ENCODE measurements at regions of chr2 and their contacts with region 1.

Region 1: DNA sequence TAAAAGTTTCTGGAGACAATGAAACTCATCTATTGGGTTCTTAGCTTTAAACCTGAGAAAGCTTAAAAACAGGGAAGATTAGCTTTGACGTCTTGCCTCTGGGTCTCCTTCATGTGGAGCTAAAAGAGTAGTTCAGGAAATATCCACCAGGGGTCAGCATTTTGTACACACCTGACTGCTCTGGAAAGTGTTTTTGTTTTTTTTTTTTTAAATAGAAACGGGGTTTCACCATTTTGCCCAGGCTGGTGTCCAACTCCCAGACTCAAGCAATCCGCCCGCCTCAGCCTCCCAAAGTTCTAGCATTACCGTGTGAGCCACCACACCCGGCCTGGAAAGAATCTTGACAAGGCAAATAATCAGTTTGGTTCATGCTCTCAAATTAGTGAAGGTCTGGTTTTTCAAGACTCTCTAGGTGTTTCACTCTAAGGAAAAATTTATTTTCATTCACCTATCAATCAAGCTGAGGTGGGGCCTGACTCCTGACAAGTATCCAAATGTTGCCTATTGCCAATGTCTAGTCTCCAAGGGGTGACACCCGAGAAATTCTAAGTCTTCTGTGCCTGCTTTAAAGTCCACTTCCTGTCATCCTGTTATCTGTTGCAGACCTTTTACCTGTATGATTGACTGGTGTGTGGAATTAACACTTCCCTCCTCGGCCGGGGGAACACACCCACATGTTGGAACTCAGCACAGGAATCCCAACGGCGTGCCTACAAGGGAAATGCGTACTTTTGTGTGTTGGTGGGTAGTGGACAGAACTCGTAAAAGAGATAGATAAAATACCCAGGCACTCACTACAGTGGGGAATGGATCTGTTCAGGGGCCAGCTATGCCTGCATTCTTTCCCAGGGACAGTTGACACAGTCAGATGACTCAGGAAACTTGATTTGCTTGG is 11.3 kb downstream of the IL1RN start:
- DNase-seq: peak; percentile 38
- H3K4me3 Mint-ChIP-seq: peak overlapping the region; percentile 23
- H3K27ac Mint-ChIP-seq: peak overlapping the region; percentile 15
- H3K4me1 Mint-ChIP-seq: peaks cover 24% of the 10 kb centered on the region
- H3K27me3 Mint-ChIP-seq: no peaks in the 10 kb centered on the region

Region 2: DNA sequence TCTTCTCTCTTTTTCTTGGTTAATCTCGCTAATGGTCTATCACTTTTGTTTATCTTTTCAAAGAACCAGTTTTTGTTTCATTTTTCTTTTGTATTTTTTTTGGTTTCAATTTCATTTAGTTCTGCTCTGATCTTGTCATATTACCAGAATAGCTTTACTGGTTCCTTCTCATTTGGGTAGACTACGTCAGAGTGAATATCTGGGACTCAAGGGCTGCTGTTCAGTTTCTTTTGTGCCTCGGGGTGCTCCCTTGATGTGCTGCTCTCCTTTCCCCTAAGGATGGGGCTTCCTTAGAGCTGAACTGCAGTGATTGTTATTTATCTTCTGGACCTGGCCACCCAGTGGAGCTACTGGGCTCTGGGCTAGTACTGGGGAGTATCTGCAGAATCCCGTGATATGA is 40.6 kb before region 1 on chr2:
- CTCF ChIA-PET with region 1: interaction called, 15 read pairs
- POLR2A ChIA-PET with region 1: no interaction called
- intact Hi-C with region 1: no loop called
- DNase-seq: peak; percentile 58
- H3K4me3 Mint-ChIP-seq: peak overlapping the region; percentile 70
- H3K27ac Mint-ChIP-seq: peak overlapping the region; percentile 88
- H3K4me1 Mint-ChIP-seq: peaks cover 32% of the 10 kb centered on the region
- H3K27me3 Mint-ChIP-seq: peaks cover 5% of the 10 kb centered on the region

Region 3: GRCh38 chr2:113148606-113149560 is 10.2 kb after region 1 on chr2:
- CTCF ChIA-PET with region 1: interaction called, 10 read pairs
- POLR2A ChIA-PET with region 1: no interaction called
- intact Hi-C with region 1: no loop called
- DNase-seq: no peak
- H3K4me3 Mint-ChIP-seq: no peak overlapping the region
- H3K27ac Mint-ChIP-seq: no peak overlapping the region
- H3K4me1 Mint-ChIP-seq: no peaks in the 10 kb centered on the region
- H3K27me3 Mint-ChIP-seq: no peaks in the 10 kb centered on the region

Region 4: GRCh38 chr2:113173542-113174395 is 35.1 kb after region 1 on chr2 and contains the start of gene PSD4:
- CTCF ChIA-PET with region 1: interaction called, 118 read pairs
- POLR2A ChIA-PET with region 1: interaction called, 11 read pairs
- intact Hi-C with region 1: loop called (anchors 1 kb)
- DNase-seq: peak; percentile 95
- H3K4me3 Mint-ChIP-seq: peak within 1 kb of the TSS; percentile 95
- H3K27ac Mint-ChIP-seq: peak within 1 kb of the TSS; percentile 94
- H3K4me1 Mint-ChIP-seq: peaks cover 74% of the 10 kb centered on the region
- H3K27me3 Mint-ChIP-seq: peaks cover 2% of the 10 kb centered on the region
- total RNA-seq, gene PSD4: 156 to 170 TPM

Region 5: GRCh38 chr2:113203901-113204519 is 65.3 kb after region 1 on chr2:
- CTCF ChIA-PET with region 1: interaction called, 308 read pairs
- POLR2A ChIA-PET with region 1: interaction called, 4 read pairs
- intact Hi-C with region 1: loop called (anchors 1 kb)
- DNase-seq: peak; percentile 85
- H3K4me3 Mint-ChIP-seq: no peak overlapping the region
- H3K27ac Mint-ChIP-seq: peak overlapping the region; percentile 79
- H3K4me1 Mint-ChIP-seq: peaks cover 10% of the 10 kb centered on the region
- H3K27me3 Mint-ChIP-seq: no peaks in the 10 kb centered on the region

Region 6: DNA sequence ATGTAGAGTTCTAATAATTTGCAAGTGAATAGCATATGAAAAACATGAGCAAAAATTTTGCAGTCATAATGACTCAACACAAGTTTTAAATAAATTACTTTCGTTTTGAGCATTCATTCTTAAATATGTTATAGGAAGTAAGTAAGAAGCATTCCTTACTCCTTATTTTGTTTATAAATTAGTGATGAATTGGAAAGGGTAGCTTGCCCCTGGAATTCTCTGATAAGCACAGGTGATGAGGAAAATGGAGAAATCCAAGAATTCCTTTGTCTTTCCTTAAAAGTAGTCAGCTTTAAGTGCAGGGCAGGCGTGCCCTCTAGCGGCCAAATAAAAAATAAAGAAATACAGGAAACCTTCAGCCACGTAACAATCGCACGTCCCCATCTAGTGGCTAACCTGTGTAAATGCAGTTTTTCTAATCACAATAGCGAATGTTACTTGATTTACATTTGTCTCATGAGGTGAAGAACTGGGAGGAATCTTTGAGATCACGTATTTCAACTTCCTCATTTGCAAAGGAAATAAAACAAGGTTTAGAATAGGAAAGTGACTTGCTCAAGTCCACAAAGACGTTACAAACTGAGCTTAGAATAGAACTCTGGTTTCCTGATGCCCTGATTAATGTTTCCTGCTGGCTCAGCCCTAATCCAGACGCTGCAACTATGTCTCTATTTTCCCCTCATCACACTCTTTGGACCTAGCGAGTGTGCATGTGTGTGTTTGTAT is 251.6 kb after region 1 on chr2:
- CTCF ChIA-PET with region 1: interaction called, 11 read pairs
- POLR2A ChIA-PET with region 1: no interaction called
- intact Hi-C with region 1: loop called (anchors 5 kb)
- DNase-seq: peak; percentile 59
- H3K4me3 Mint-ChIP-seq: peak overlapping the region; percentile 7
- H3K27ac Mint-ChIP-seq: peak overlapping the region; percentile 38
- H3K4me1 Mint-ChIP-seq: peaks cover 11% of the 10 kb centered on the region
- H3K27me3 Mint-ChIP-seq: peaks cover 9% of the 10 kb centered on the region

Measured in activated CD4-positive, alpha-beta memory T cell treated with anti-CD3 and anti-CD28 coated beads for 36 hours (primary cell).